PC-9 (cell line): ENCODE measurements at regions of chr12 and their contacts with region 1.

Region 1: GRCh38 chr12:99959547-99960180 is 25.1 kb downstream of the ANKS1B start:
- DNase-seq: peak in 1 of 2 experiments; percentile 78
- H3K4me3 ChIP-seq: no peak overlapping the region
- H3K27ac ChIP-seq: no peak overlapping the region
- H3K4me1 ChIP-seq: peaks cover 15% of the 10 kb centered on the region
- H3K27me3 ChIP-seq: peaks cover 69% of the 10 kb centered on the region
- CTCF ChIP-seq: no peak

Region 2: GRCh38 chr12:99521664-99522063 is 438.0 kb before region 1 on chr12:
- CTCF ChIA-PET with region 1: no interaction called
- POLR2A ChIA-PET with region 1: no interaction called
- intact Hi-C with region 1: no loop called
- DNase-seq: no peak
- H3K4me3 ChIP-seq: no peak overlapping the region
- H3K27ac ChIP-seq: no peak overlapping the region
- H3K4me1 ChIP-seq: no peaks in the 10 kb centered on the region
- H3K27me3 ChIP-seq: no peaks in the 10 kb centered on the region
- CTCF ChIP-seq: no peak

Region 3: GRCh38 chr12:100460702-100461101 is 501.0 kb after region 1 on chr12:
- CTCF ChIA-PET with region 1: interaction called, 13 read pairs
- POLR2A ChIA-PET with region 1: no interaction called
- intact Hi-C with region 1: no loop called
- DNase-seq: no peak
- H3K4me3 ChIP-seq: no peak overlapping the region
- H3K27ac ChIP-seq: no peak overlapping the region
- H3K4me1 ChIP-seq: no peaks in the 10 kb centered on the region
- H3K27me3 ChIP-seq: peaks cover 26% of the 10 kb centered on the region; the same call in 1 of the 2 replicates
- CTCF ChIP-seq: no peak